ENCODE measurements at regions of chr17 and their contacts with region 1.

Region 1: GRCh38 chr17:47889734-47890529 is 6.1 kb upstream of the SP2 start:
- DNase-seq: peak; percentile 89 to 93
- ATAC-seq: peak; percentile 91 to 100 (median 98)
- H3K4me3 ChIP-seq: no peak overlapping the region
- H3K4me3 Mint-ChIP-seq: no peak overlapping the region
- H3K27ac ChIP-seq: no peak overlapping the region
- H3K27ac Mint-ChIP-seq: peak overlapping the region in 1 of 2 donors; percentile 52
- H3K4me1 ChIP-seq: peaks cover under 1% of the 10 kb centered on the region
- H3K4me1 Mint-ChIP-seq: peaks cover 13 to 14% of the 10 kb centered on the region in 2 donors
- H3K27me3 ChIP-seq: no peaks in the 10 kb centered on the region
- H3K27me3 Mint-ChIP-seq: no peaks in the 10 kb centered on the region
- CTCF ChIP-seq: peak; percentile 93

Region 2: DNA sequence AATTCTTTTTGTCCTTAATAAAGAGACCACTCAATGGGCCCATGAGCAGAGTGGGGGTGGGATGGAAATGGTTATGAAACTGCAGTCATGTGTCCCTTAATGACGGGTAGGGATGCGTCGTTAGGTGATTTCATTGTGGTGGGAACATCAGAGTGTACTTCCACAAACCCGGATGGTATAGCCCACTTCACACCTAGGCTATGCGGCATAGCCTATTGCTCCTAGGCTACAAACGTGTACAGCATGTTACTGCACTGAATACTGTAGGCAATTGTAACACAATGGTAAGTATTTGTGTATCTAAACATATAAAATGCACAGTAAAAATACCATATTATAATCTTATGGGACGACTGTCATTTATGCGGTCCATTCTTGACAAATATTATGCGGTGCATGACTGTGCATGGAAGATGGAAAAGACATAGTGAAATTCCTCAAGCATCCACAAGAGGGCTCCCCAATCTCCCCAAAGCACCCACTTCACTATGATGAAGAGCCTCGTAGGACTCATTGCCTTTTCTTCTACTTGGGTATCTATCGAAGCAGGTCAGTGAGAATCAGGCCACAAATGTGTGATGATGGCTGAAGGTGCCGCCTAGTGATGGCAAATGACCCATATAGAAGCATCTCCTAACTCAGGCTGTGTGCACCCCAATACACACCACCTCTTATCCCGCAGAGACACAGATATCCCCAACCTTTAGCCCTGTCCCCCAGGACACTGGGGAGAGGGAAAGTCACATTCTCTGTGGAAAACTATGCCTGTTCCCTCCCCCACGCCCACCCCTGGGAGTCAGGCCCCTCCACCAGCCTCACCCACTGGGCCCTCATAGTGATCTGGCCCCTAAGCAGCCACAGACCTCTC is 113.4 kb before region 1 on chr17:
- intact Hi-C with region 1: loop called (anchors 5 kb)
- DNase-seq: peak in 1 of 2 donors; percentile 78
- ATAC-seq: peak; percentile 74 to 98 (median 92)
- H3K4me3 ChIP-seq: no peak overlapping the region
- H3K4me3 Mint-ChIP-seq: no peak overlapping the region
- H3K27ac ChIP-seq: no peak overlapping the region
- H3K27ac Mint-ChIP-seq: no peak overlapping the region
- H3K4me1 ChIP-seq: peaks cover 3% of the 10 kb centered on the region
- H3K4me1 Mint-ChIP-seq: peaks cover 0 to 7% of the 10 kb centered on the region in 2 donors
- H3K27me3 ChIP-seq: peaks cover 4% of the 10 kb centered on the region
- H3K27me3 Mint-ChIP-seq: peaks cover 18 to 25% of the 10 kb centered on the region in 2 donors
- CTCF ChIP-seq: peak; percentile 77

Region 3: DNA sequence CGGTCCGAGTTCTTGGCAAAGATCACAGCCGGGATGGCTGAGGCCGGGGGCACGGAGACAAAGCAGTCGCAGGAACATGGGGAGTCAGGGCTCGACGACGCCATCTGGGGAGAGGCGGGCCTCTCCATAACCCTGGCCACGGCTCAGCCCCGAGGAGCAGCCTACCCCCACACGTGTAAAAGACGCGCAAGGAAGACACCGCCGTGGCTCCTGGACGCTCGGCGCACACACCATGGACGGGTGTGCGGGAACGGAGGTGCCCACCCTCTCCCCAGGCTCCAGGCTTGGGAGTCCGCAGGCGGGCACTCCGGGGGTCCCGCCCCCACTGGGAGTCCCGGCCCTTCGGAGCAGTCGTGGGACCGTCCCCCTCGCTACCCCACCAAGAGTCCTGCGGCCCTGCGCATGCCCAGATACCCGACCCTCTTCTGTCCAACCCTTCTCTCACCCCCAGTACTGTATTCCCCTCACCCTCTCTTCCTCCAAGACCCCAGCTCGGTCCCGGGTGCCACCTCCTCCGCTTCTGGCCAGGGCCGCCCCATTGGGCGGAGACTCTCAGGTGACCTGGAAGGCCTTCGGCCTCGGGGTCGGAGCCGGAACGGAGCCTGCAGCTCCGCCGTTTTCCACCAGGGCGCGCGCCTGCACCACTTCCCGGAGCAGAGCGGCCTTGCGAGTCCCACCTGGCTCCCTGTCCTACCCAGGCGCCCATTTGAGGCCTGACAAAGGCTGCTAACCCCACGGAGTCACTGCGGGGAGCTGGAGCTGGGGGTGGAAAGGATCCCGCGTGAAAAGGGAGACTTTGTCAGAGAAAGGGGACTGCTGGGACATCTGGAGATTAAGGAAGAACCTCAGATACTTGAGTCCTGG is 49.0 kb before region 1 on chr17 and contains the start of gene SCRN2:
- intact Hi-C with region 1: loop called (anchors 1 kb)
- DNase-seq: peak; percentile 89 to 90
- ATAC-seq: peak; percentile 95 to 96 (median 96)
- H3K4me3 ChIP-seq: peak within 1 kb of the TSS; percentile 90
- H3K4me3 Mint-ChIP-seq: peak within 1 kb of the TSS; percentile 99
- H3K27ac ChIP-seq: peak within 1 kb of the TSS; percentile 49
- H3K27ac Mint-ChIP-seq: peak within 1 kb of the TSS; percentile 81 to 97
- H3K4me1 ChIP-seq: peaks cover 18% of the 10 kb centered on the region
- H3K4me1 Mint-ChIP-seq: peaks cover 15 to 24% of the 10 kb centered on the region in 2 donors
- H3K27me3 ChIP-seq: peaks cover 4% of the 10 kb centered on the region
- H3K27me3 Mint-ChIP-seq: peaks cover 8 to 16% of the 10 kb centered on the region in 2 donors
- CTCF ChIP-seq: peak; percentile 87
- total RNA-seq, gene SCRN2: 33.7 to 38.0 (median 35.7) TPM

Region 4: DNA sequence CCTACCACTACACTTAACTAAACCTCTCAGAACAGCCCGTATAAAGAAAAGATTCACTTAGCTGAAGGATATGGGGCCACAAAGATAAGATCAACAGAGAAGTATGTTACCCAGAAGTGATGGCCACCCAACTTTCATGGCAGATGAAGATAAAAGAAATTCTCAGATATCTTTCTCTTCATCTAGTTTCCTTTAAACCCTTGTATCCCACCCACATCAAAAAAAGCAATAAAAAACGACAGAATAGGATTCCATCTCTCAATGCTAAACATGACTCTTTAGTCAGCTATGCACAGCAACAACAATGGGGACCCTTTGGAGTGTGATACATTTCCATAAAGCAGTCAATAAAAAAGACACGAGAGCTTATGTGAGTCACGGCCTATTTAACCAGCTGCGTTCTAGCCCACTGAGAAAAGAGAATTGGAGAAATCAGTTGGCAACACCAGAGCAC is 304.2 kb after region 1 on chr17:
- intact Hi-C with region 1: no loop called
- DNase-seq: peak in 1 of 2 donors; percentile 25
- ATAC-seq: no peak
- H3K4me3 ChIP-seq: no peak overlapping the region
- H3K4me3 Mint-ChIP-seq: no peak overlapping the region
- H3K27ac ChIP-seq: no peak overlapping the region
- H3K27ac Mint-ChIP-seq: peak overlapping the region; percentile 30 to 51
- H3K4me1 ChIP-seq: no peaks in the 10 kb centered on the region
- H3K4me1 Mint-ChIP-seq: peaks cover 42 to 52% of the 10 kb centered on the region in 2 donors
- H3K27me3 ChIP-seq: no peaks in the 10 kb centered on the region
- H3K27me3 Mint-ChIP-seq: no peaks in the 10 kb centered on the region
- CTCF ChIP-seq: no peak